Caco-2 (cell line): ENCODE measurements at regions of chr10 and their contacts with region 1.

Region 1: DNA sequence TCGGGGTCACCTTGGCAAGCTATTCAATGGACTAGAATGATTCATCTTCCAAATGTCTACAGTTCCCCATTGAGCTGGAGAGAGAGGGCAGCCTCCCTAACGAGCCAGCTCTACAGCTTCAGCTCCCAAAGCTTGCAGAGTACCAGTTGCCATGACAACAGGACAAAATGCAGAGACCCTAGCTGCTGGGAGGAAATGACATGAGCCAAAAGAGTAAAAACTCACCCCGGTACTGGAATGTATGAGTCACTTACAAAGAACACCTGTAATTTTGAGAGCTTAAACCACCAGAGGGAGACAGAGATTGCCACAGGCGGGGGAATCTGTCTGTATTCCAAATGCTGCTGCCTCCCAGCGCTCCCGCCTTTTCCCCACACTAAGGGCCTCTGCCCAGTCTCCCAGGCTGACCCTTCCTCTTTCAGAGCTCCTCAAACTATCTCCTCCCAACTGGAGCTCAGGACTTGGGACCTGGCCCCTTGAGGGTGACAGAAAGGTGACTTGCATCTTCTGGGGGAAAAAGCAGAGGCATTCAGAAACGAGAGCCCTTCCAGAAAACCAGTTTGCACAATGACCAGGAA is 95.5 kb downstream of the CUL2 start:
- DNase-seq: peak; percentile 85 to 89
- H3K4me3 ChIP-seq: no peak overlapping the region
- H3K4me3 Mint-ChIP-seq: no peak overlapping the region
- H3K27ac Mint-ChIP-seq: peak overlapping the region; percentile 51
- H3K4me1 ChIP-seq: peaks cover 27% of the 10 kb centered on the region
- H3K4me1 Mint-ChIP-seq: peaks cover 23% of the 10 kb centered on the region
- H3K27me3 ChIP-seq: no peaks in the 10 kb centered on the region
- H3K27me3 Mint-ChIP-seq: no peaks in the 10 kb centered on the region
- CTCF ChIP-seq: peak; percentile 88 to 96

Region 2: GRCh38 chr10:34666008-34666705 is 328.5 kb before region 1 on chr10:
- CTCF ChIA-PET with region 1: interaction called, 4 read pairs
- POLR2A ChIA-PET with region 1: no interaction called
- intact Hi-C with region 1: loop called (anchors 1 kb)
- DNase-seq: peak; percentile 62 to 65
- H3K4me3 ChIP-seq: no peak overlapping the region
- H3K4me3 Mint-ChIP-seq: no peak overlapping the region
- H3K27ac Mint-ChIP-seq: peak overlapping the region; percentile 26
- H3K4me1 ChIP-seq: peaks cover 15% of the 10 kb centered on the region
- H3K4me1 Mint-ChIP-seq: peaks cover 29% of the 10 kb centered on the region
- H3K27me3 ChIP-seq: no peaks in the 10 kb centered on the region
- H3K27me3 Mint-ChIP-seq: no peaks in the 10 kb centered on the region
- CTCF ChIP-seq: peak; percentile 26 to 63

Region 3: DNA sequence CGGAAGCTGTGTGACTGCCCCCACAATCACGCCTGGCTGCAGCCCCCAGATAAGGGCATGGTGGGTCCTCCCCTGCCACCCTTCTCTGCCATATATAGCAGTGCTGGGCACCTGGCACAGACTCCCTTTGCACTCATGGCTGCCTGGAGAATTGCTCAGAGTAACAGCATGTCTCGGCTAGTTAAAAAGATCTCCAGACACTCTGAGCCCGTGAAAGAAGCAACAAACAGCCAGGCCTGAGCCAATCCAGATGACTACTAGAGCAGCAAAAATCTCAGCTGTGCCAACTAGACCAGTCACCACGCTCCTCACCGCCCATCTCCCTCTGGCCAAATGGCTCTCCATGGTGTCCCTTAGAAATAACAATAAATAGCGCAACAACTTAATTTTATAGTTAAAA is 250.8 kb before region 1 on chr10:
- CTCF ChIA-PET with region 1: no interaction called
- POLR2A ChIA-PET with region 1: no interaction called
- intact Hi-C with region 1: no loop called
- DNase-seq: no peak
- H3K4me3 ChIP-seq: no peak overlapping the region
- H3K4me3 Mint-ChIP-seq: no peak overlapping the region
- H3K27ac Mint-ChIP-seq: no peak overlapping the region
- H3K4me1 ChIP-seq: peaks cover 23% of the 10 kb centered on the region
- H3K4me1 Mint-ChIP-seq: peaks cover 28% of the 10 kb centered on the region
- H3K27me3 ChIP-seq: no peaks in the 10 kb centered on the region
- H3K27me3 Mint-ChIP-seq: no peaks in the 10 kb centered on the region
- CTCF ChIP-seq: no peak

Region 4: DNA sequence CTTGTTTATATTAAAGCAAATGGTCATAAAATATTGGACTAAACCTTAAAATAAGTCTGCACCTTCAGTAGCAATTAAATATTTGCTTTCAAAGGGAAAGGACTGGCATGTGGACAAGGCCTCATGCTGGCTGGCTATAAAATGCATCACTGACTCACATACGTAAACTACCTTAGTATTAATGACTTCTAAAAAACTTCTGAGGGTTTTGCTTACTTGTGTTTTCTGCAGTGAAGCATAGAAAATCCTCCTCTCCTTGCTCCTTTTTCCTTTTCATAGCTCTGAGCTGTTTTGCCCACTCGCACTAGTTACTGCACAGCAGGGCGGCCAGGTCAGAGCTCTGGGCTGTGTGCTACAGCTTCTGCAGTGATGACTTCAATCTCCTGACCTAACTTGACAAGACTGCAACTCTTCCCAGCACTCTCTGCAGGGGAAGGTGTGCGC is 13.2 kb after region 1 on chr10:
- CTCF ChIA-PET with region 1: interaction called, 3 read pairs
- POLR2A ChIA-PET with region 1: interaction called, 5 read pairs
- intact Hi-C with region 1: loop called (anchors 2 kb)
- DNase-seq: no peak
- H3K4me3 ChIP-seq: no peak overlapping the region
- H3K4me3 Mint-ChIP-seq: no peak overlapping the region
- H3K27ac Mint-ChIP-seq: no peak overlapping the region
- H3K4me1 ChIP-seq: no peaks in the 10 kb centered on the region
- H3K4me1 Mint-ChIP-seq: peaks cover 12% of the 10 kb centered on the region
- H3K27me3 ChIP-seq: no peaks in the 10 kb centered on the region
- H3K27me3 Mint-ChIP-seq: no peaks in the 10 kb centered on the region
- CTCF ChIP-seq: no peak

Region 5: GRCh38 chr10:35042783-35043182 is 48.1 kb after region 1 on chr10:
- CTCF ChIA-PET with region 1: no interaction called
- POLR2A ChIA-PET with region 1: no interaction called
- intact Hi-C with region 1: no loop called
- DNase-seq: no peak
- H3K4me3 ChIP-seq: no peak overlapping the region
- H3K4me3 Mint-ChIP-seq: no peak overlapping the region
- H3K27ac Mint-ChIP-seq: no peak overlapping the region
- H3K4me1 ChIP-seq: no peaks in the 10 kb centered on the region
- H3K4me1 Mint-ChIP-seq: peaks cover 9% of the 10 kb centered on the region
- H3K27me3 ChIP-seq: no peaks in the 10 kb centered on the region
- H3K27me3 Mint-ChIP-seq: no peaks in the 10 kb centered on the region
- CTCF ChIP-seq: no peak

Region 6: GRCh38 chr10:35058134-35058533 is 63.5 kb after region 1 on chr10:
- CTCF ChIA-PET with region 1: no interaction called
- POLR2A ChIA-PET with region 1: no interaction called
- intact Hi-C with region 1: loop called (anchors 10 kb)
- DNase-seq: no peak
- H3K4me3 ChIP-seq: no peak overlapping the region
- H3K4me3 Mint-ChIP-seq: no peak overlapping the region
- H3K27ac Mint-ChIP-seq: no peak overlapping the region
- H3K4me1 ChIP-seq: no peaks in the 10 kb centered on the region
- H3K4me1 Mint-ChIP-seq: peaks cover 6% of the 10 kb centered on the region
- H3K27me3 ChIP-seq: no peaks in the 10 kb centered on the region
- H3K27me3 Mint-ChIP-seq: no peaks in the 10 kb centered on the region
- CTCF ChIP-seq: no peak

Region 7: GRCh38 chr10:35218339-35218955 is 223.8 kb after region 1 on chr10:
- CTCF ChIA-PET with region 1: interaction called, 5 read pairs
- POLR2A ChIA-PET with region 1: no interaction called
- intact Hi-C with region 1: loop called (anchors 2 kb)
- DNase-seq: peak; percentile 81 to 82
- H3K4me3 ChIP-seq: no peak overlapping the region
- H3K4me3 Mint-ChIP-seq: no peak overlapping the region
- H3K27ac Mint-ChIP-seq: no peak overlapping the region
- H3K4me1 ChIP-seq: peaks cover 5% of the 10 kb centered on the region; the same call in 1 of the 2 replicates
- H3K4me1 Mint-ChIP-seq: peaks cover 7% of the 10 kb centered on the region
- H3K27me3 ChIP-seq: no peaks in the 10 kb centered on the region; the same call in 1 of the 2 replicates
- H3K27me3 Mint-ChIP-seq: peaks cover 3% of the 10 kb centered on the region
- CTCF ChIP-seq: peak; percentile 84 to 91